ENCODE measurements at regions of chr6 and their contacts with region 1.

Region 1: GRCh38 chr6:36360241-36361054 is 23.8 kb upstream of the BNIP5 start:
- DNase-seq: peak; percentile 88
- ATAC-seq: peak; percentile 97
- H3K4me3 ChIP-seq: no peak overlapping the region
- H3K27ac ChIP-seq: no peak overlapping the region
- H3K4me1 ChIP-seq: no peaks in the 10 kb centered on the region
- H3K27me3 ChIP-seq: no peaks in the 10 kb centered on the region
- CTCF ChIP-seq: peak; percentile 88

Region 2: DNA sequence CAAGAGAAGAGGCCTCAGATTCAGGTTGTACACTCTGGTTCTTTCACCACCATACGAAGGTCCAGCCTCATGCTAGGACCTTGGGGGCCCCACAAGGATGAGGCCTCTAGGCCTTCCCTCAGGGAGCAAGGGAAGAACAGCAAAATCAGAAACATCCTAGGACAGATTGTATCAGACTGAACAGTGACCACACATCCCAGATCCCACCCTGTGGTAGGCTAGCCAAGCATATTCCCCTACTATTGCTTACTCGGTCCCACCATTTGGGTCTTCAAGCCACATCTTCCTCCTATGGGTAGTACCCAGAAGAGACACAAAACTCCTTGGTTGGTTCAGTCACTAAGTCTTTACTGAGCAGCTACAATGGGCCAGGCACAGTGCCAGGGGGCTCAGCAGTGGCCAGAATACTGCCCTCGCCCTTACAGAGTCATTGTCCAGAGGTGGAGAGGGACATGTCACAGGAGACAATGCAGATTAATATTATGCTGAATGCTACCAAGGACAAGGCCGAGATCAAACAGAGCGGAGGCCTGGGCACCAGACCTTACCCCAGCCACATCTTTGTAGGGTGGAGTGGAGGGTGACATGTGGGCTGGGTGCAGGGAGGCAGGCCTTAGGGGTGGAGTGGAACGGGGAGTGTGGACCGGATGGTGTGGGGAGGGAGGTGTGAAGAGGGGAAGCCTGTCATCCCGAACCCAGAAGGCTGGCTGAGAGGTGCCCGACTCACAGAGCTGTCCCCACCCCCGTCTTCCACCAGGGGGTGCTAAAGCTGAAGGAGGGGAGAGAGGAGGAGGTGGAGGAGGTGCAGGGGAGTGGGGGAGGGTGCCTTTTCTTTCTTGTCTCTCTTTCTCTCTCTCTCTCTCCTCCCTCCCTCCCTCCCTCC is 236.9 kb before region 1 on chr6:
- CTCF ChIA-PET with region 1: no interaction called
- POLR2A ChIA-PET with region 1: no interaction called
- intact Hi-C with region 1: loop called (anchors 2 kb)
- DNase-seq: peak; percentile 91
- ATAC-seq: peak; percentile 54
- H3K4me3 ChIP-seq: no peak overlapping the region
- H3K27ac ChIP-seq: no peak overlapping the region
- H3K4me1 ChIP-seq: peaks cover 37% of the 10 kb centered on the region
- H3K27me3 ChIP-seq: no peaks in the 10 kb centered on the region
- CTCF ChIP-seq: peak; percentile 68

Region 3: GRCh38 chr6:36224904-36225461 is 135.5 kb before region 1 on chr6:
- CTCF ChIA-PET with region 1: no interaction called
- POLR2A ChIA-PET with region 1: no interaction called
- intact Hi-C with region 1: no loop called
- DNase-seq: peak; percentile 25
- ATAC-seq: no peak
- H3K4me3 ChIP-seq: no peak overlapping the region
- H3K27ac ChIP-seq: no peak overlapping the region
- H3K4me1 ChIP-seq: peaks cover 6% of the 10 kb centered on the region
- H3K27me3 ChIP-seq: no peaks in the 10 kb centered on the region
- CTCF ChIP-seq: no peak

Region 4: GRCh38 chr6:36302227-36302976 is 58.0 kb before region 1 on chr6:
- CTCF ChIA-PET with region 1: interaction called, 6 read pairs
- POLR2A ChIA-PET with region 1: no interaction called
- intact Hi-C with region 1: loop called (anchors 1 kb)
- DNase-seq: peak; percentile 96
- ATAC-seq: peak; percentile 99
- H3K4me3 ChIP-seq: no peak overlapping the region
- H3K27ac ChIP-seq: no peak overlapping the region
- H3K4me1 ChIP-seq: no peaks in the 10 kb centered on the region
- H3K27me3 ChIP-seq: no peaks in the 10 kb centered on the region
- CTCF ChIP-seq: peak; percentile 99

Region 5: DNA sequence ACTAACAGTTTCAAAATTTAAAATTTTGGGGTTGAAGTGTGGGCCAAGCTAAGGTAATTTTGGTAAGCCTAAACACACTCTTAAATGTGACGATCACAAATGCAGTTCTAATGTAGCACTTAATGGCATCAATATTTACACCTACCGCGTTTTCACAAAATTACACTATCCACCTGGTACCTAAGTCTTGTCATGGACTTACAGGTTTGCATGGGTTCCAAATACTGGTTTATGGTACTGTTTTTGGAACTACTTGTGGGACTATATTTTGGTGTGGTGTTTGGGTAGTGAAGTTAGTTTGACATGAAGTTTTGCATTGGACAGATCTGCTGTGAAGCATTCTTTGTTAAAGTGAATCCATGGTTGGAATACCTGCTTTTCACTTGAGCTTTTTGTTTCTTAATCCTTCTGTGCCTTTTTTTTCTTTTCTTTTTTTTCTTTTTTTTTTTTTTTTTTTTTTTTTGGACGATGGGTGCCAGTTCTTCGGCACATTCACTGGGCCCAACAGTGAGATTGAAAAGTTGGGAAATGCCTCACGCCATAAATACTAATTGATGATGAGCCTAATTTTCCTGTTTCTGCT is 240.2 kb after region 1 on chr6:
- CTCF ChIA-PET with region 1: no interaction called
- POLR2A ChIA-PET with region 1: interaction called, 14 read pairs
- intact Hi-C with region 1: no loop called
- DNase-seq: no peak
- ATAC-seq: no peak
- H3K4me3 ChIP-seq: no peak overlapping the region
- H3K27ac ChIP-seq: no peak overlapping the region
- H3K4me1 ChIP-seq: peaks cover 34% of the 10 kb centered on the region
- H3K27me3 ChIP-seq: no peaks in the 10 kb centered on the region
- CTCF ChIP-seq: no peak

Measured in PC-3 (cell line).